Activated CD4-positive, alpha-beta T cell treated with anti-CD3 and anti-CD28 coated beads for 36 hours (primary cell): ENCODE measurements at regions of chr11 and their contacts with region 1.

Region 1: DNA sequence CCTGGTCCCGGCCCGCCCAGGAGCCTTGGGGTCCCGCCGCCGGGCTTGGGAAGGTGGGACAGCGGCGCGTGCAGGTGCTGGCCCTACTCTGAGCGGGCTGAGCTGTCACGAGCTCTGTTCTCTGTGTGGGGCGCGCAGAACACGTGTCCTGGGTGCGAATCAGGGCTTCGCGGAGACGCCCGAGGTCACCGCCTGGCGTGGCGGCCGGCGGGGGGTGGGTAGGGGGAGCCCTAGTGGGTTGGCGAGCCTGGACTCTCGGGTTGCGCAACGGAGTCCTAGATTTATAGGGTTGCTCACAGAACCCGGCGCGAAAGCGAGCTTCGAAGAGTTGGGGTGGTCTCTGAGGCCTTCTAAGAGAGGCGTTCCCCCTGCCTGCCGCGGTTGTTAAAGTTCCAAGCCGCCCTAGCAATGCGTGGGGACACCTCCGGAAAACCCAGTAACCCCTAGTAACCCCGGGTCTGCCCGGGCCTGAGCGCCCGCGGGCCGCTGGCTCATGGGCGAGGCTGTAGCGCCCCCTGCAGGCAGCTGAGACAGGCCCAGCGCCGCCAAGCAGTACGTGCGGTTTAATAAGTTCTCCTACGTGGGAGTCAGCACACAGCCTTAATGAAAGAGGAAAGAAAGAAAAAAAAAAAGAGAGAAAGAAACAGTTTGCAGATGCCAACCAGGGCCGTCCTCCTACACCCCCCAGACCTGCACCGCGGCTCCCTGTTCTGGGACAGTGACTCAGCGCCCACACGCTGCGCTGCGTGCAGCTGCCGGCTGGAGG is 2.8 kb downstream of the ADM start:
- DNase-seq: peak; percentile 95
- ATAC-seq: peak; percentile 75
- H3K4me3 Mint-ChIP-seq: peak overlapping the region; percentile 77
- H3K27ac Mint-ChIP-seq: peak overlapping the region; percentile 96
- H3K4me1 Mint-ChIP-seq: peaks cover 50% of the 10 kb centered on the region
- H3K27me3 Mint-ChIP-seq: peaks cover 49% of the 10 kb centered on the region

Region 2: DNA sequence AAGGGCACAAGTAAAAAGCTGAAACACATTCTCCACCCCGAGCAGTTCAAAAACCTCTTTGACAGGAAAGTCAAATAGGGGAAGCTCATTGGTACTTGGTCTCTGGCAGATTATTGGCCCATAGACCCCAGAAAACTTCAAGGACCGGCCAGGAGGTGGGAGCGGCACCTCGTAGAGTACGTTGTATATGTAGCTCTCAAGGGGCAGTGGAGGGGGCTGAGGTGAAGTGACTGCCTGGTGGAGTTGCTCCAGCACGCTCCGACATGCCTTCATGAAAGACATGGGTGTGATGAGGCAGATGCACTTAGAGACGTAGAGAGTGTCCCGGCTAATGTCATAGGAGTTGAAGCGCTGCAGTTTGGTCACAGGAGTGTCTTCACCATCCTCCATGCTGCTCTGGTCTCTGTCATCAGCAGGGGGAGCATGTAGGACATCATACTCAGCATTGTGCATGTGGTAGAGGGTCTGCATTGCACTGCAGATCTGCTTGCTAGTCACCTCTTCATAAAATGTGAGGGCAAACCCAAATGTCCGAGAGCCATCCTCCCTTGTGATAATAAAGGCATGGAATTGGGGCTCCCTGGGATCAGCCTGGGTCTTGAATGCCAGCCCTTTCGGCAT is 1103.8 kb before region 1 on chr11:
- CTCF ChIA-PET with region 1: no interaction called
- POLR2A ChIA-PET with region 1: no interaction called
- intact Hi-C with region 1: no loop called
- DNase-seq: no peak
- ATAC-seq: peak; percentile 47
- H3K4me3 Mint-ChIP-seq: no peak overlapping the region
- H3K27ac Mint-ChIP-seq: no peak overlapping the region
- H3K4me1 Mint-ChIP-seq: peaks cover 36% of the 10 kb centered on the region
- H3K27me3 Mint-ChIP-seq: no peaks in the 10 kb centered on the region

Region 3: DNA sequence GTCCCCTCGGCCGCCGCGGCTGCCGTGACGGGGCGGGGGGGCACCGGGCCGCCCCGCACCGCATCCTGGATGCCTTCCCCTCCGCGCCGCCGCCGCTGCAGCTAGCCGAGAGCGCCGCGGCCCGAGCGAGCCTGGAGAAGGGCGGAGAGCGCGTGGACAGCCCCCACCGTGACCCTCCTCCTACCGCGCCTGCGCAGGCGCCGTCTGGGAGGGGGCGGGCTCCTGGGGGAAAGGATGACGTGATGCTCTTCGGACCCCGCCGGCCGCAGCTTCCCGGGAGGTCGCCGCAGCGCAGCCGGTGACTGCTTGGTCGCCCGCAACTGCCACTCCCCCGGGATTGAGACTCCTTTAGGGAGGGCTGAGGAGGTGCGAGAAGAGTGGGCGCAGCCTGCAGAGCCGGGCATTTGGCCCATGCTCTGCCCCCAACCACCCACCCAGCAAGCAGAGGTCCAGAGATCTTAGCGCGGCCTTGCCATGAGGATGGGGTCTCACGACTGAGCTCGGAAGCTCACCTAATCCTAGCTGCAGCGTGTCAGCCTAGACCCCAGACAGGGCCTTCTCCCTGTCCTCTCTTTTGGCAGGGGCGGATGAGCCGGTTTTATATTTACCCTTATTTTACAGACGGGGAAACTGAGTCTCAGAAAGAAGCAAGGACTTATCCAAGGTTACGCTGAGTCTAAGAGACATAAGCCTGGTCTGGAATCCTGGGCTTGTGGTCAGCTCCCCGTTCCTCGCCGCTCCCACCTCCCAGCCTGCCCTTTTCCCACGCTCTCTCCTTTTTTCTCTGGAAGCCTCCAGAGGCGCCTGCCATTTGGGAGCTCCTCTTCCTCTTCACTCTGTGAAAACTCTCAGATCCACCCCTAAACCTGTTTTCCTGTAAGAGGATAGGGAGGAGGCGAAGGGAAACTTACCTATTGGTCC is 1042.2 kb before region 1 on chr11 and contains the start of gene DENND5A:
- CTCF ChIA-PET with region 1: no interaction called
- POLR2A ChIA-PET with region 1: no interaction called
- intact Hi-C with region 1: loop called in 1 of 2 experiments (anchors 10 kb)
- DNase-seq: peak; percentile 71
- ATAC-seq: peak; percentile 37
- H3K4me3 Mint-ChIP-seq: peak within 1 kb of the TSS; percentile 87
- H3K27ac Mint-ChIP-seq: peak within 1 kb of the TSS; percentile 93
- H3K4me1 Mint-ChIP-seq: peaks cover 33% of the 10 kb centered on the region
- H3K27me3 Mint-ChIP-seq: peaks cover 6% of the 10 kb centered on the region
- total RNA-seq, gene DENND5A: 43.6 to 62.6 TPM

Region 4: GRCh38 chr11:9460322-9461067 is 847.1 kb before region 1 on chr11 and contains the start of gene ZNF143:
- CTCF ChIA-PET with region 1: no interaction called
- POLR2A ChIA-PET with region 1: no interaction called
- intact Hi-C with region 1: loop called in 1 of 2 experiments (anchors 5 kb)
- DNase-seq: peak; percentile 100
- ATAC-seq: peak; percentile 93
- H3K4me3 Mint-ChIP-seq: peak within 1 kb of the TSS; percentile 93
- H3K27ac Mint-ChIP-seq: peak within 1 kb of the TSS; percentile 99
- H3K4me1 Mint-ChIP-seq: peaks cover 24% of the 10 kb centered on the region
- H3K27me3 Mint-ChIP-seq: no peaks in the 10 kb centered on the region
- total RNA-seq, gene ZNF143: 32.6 to 34.9 TPM

Region 5: GRCh38 chr11:9663699-9664275 is 643.8 kb before region 1 on chr11 and contains the start of gene SWAP70:
- CTCF ChIA-PET with region 1: no interaction called
- POLR2A ChIA-PET with region 1: no interaction called
- intact Hi-C with region 1: loop called in 1 of 2 experiments (anchors 2 kb)
- DNase-seq: peak; percentile 85
- ATAC-seq: peak; percentile 94
- H3K4me3 Mint-ChIP-seq: peak within 1 kb of the TSS; percentile 79
- H3K27ac Mint-ChIP-seq: peak within 1 kb of the TSS; percentile 42
- H3K4me1 Mint-ChIP-seq: peaks cover 11% of the 10 kb centered on the region
- H3K27me3 Mint-ChIP-seq: peaks cover 24% of the 10 kb centered on the region
- total RNA-seq, gene SWAP70: 7.5 to 9.7 TPM

Region 6: DNA sequence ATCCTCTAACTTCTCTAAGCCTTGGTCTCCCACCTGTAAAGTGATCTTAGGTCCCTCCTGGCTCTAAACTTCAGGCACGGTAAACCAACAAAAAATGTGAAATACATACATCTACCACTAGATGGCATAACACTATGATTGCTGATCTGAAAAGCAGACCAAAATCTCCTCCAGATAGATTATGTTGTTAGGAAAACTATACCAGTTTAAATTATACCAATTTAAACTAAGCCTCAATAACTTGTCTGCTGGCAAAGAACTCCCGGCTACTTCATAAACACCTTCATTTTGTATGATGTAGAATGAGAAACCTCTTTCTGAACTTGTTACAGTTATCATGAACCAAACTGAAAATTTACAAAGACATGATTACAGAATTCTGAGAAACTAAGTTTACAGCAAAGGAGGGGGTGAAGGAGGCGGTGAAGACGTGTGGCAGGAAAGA is 99.5 kb before region 1 on chr11:
- CTCF ChIA-PET with region 1: interaction called, 36 read pairs
- POLR2A ChIA-PET with region 1: no interaction called
- intact Hi-C with region 1: loop called (anchors 1 kb)
- DNase-seq: peak; percentile 11
- ATAC-seq: peak; percentile 74
- H3K4me3 Mint-ChIP-seq: no peak overlapping the region
- H3K27ac Mint-ChIP-seq: no peak overlapping the region
- H3K4me1 Mint-ChIP-seq: no peaks in the 10 kb centered on the region
- H3K27me3 Mint-ChIP-seq: peaks cover 3% of the 10 kb centered on the region

Region 7: DNA sequence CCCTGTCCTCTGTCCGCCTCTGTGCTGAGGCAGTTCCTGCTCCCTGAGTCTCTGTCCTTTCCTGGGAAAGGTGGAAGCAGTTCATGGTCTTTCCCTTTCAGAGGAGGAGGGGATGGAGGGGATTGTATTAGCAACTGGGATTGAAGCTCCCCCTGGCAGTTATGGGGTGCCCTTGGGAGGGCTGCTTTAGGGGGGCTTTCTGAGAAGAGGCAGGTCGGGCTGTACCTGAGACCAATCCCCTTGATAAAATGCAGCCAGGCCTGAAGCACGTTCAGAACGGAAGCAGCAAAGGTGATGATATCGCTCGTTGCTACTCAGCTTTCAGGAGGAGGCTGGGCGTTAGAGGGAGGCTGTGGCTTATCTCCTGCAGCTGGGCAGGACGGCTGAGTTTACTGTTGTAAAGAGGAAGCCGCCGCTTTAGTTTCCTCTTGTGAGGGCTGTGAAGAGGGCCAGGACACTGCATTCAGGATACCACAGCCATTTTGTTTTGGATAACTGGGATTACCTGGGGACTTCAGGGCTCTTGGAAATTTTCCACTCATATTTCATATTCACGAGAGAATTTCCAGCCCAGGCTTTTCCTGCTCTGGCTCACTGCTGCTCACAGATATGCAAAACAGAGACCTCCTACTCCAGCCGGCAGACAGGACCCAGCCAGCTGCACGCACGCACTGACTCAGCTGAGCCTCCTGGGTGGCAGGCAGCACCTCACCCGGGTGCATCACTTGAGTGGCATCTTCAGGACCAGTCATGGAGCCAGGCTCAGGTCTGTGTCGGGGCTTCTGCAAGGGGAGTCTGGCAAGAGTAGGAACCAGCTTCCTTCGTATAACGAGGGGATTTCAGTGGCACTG is 148.2 kb after region 1 on chr11:
- CTCF ChIA-PET with region 1: no interaction called
- POLR2A ChIA-PET with region 1: no interaction called
- intact Hi-C with region 1: loop called in 1 of 2 experiments (anchors 5 kb)
- DNase-seq: peak; percentile 91
- ATAC-seq: peak; percentile 80
- H3K4me3 Mint-ChIP-seq: peak overlapping the region; percentile 91
- H3K27ac Mint-ChIP-seq: peak overlapping the region; percentile 98
- H3K4me1 Mint-ChIP-seq: peaks cover 88% of the 10 kb centered on the region
- H3K27me3 Mint-ChIP-seq: no peaks in the 10 kb centered on the region

Region 8: DNA sequence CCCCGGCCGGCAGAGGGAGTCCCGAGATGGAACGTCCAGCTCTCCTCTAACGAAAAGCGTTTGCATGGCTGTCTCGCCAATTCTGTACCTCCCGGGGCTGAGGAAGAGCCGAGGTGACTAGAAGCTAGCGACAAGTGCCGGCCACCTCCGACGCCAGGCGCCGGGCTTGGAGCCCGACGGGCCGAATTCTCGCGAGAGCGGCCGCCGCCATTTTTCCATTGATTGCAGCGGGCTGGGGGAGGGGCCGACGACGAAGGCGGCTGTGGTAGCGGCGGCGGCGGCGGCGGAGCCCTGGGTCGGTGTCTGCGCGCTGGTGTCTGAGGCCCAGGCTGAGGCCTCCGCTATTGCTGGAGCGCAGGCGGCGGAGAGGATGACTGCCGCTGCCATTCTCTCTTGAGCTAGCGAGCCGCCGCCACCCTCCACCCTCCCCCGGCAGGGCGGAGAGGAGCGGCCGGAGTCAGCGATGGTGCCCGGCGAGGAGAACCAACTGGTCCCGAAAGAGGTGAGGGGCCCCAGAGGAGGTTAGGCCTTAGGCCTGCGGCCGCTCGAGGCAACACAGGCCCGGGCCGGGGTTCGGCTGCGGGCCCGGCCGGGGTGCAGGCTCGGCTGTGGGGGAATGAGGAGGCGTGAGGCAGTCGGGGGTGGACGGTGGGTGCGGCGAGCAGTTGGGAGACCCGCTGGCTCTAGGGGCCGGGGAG is 1534.2 kb after region 1 on chr11 and contains the start of gene USP47:
- CTCF ChIA-PET with region 1: no interaction called
- POLR2A ChIA-PET with region 1: no interaction called
- intact Hi-C with region 1: loop called (anchors 5 to 10 kb)
- DNase-seq: peak; percentile 97
- ATAC-seq: peak; percentile 54
- H3K4me3 Mint-ChIP-seq: no peak within 1 kb of the TSS
- H3K27ac Mint-ChIP-seq: no peak within 1 kb of the TSS
- H3K4me1 Mint-ChIP-seq: peaks cover 28% of the 10 kb centered on the region
- H3K27me3 Mint-ChIP-seq: peaks cover 8% of the 10 kb centered on the region
- total RNA-seq, gene USP47: 43.3 to 56.3 TPM